ENCODE measurements at regions of chr10 and their contacts with region 1.

Region 1: GRCh38 chr10:102352066-102352715 is 43.3 kb upstream of the NFKB2 start:
- DNase-seq: peak in 2 of 4 donors; percentile 49 to 72
- ATAC-seq: peak; percentile 84
- H3K4me3 ChIP-seq: no peak overlapping the region
- H3K27ac ChIP-seq: no peak overlapping the region
- H3K4me1 ChIP-seq: no peaks in the 10 kb centered on the region
- H3K27me3 ChIP-seq: no peaks in the 10 kb centered on the region
- CTCF ChIP-seq: peak; percentile 85 to 93

Region 2: GRCh38 chr10:102101152-102101551 is 251.0 kb before region 1 on chr10:
- intact Hi-C with region 1: no loop called
- DNase-seq: no peak
- ATAC-seq: no peak
- H3K4me3 ChIP-seq: no peak overlapping the region
- H3K27ac ChIP-seq: no peak overlapping the region
- H3K4me1 ChIP-seq: peaks cover 0 to 4% of the 10 kb centered on the region in 2 donors
- H3K27me3 ChIP-seq: no peaks in the 10 kb centered on the region
- CTCF ChIP-seq: no peak

Region 3: DNA sequence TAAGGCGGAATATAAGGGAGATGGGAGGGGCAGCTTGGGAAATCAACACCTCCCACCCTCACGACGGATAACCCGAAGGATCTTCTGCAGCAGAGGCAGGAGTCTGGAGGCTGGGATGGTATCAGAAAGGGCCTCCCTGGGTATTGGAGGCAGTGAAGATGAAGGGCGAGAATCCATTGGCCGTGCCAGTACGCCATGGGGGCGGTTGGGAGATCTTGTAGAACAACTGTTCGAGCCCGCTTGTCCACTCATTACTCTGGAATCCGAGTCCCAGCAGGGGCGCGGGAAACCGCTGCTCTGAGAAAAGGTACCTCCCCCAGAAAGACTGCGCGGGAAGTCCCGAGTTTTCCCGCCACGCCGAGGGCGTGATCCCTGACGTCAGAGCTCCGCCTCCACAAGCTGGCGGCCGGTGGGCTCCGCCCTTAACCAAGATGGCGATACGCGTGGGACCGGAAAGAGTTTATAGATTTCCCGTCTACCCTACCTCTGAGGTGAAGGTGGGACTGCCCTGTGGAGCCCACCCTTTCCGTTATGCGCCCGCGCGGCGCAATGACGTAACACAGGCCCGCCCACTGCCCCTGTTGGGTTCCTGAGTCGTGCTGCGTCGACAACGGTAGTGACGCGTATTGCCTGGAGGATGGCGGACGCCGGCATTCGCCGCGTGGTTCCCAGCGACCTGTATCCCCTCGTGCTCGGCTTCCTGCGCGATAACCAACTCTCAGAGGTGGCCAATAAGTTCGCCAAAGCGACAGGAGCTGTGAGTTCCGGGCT is 200.2 kb before region 1 on chr10 and contains the start of gene NOLC1:
- intact Hi-C with region 1: loop called in 1 of 2 experiments (anchors 10 kb)
- DNase-seq: peak; percentile 97 to 99 (median 98)
- ATAC-seq: peak; percentile 98
- H3K4me3 ChIP-seq: peak within 1 kb of the TSS; percentile 83 to 93
- H3K27ac ChIP-seq: peak within 1 kb of the TSS; percentile 84 to 91
- H3K4me1 ChIP-seq: peaks cover 8 to 44% of the 10 kb centered on the region in 2 donors
- H3K27me3 ChIP-seq: no peaks in the 10 kb centered on the region
- CTCF ChIP-seq: no peak
- polyA plus RNA-seq, gene NOLC1: 72.8 to 95.7 (median 83.4) TPM

Region 4: GRCh38 chr10:102229810-102230263 is 122.4 kb before region 1 on chr10:
- intact Hi-C with region 1: loop called (anchors 5 to 10 kb)
- DNase-seq: peak; percentile 75 to 98 (median 87)
- ATAC-seq: peak; percentile 75
- H3K4me3 ChIP-seq: peak overlapping the region in 1 of 2 donors; percentile 43
- H3K27ac ChIP-seq: no peak overlapping the region
- H3K4me1 ChIP-seq: peaks cover 20 to 46% of the 10 kb centered on the region in 2 donors
- H3K27me3 ChIP-seq: peaks cover 16 to 51% of the 10 kb centered on the region in 2 donors
- CTCF ChIP-seq: peak; percentile 87 to 91